Right ventricle myocardium superior (tissue), 1 donor: ENCODE measurements at regions of chr19 and their contacts with region 1.

Region 1: GRCh38 chr19:16041299-16041990 is 34.9 kb upstream of the TPM4 start:
- DNase-seq: peak; percentile 88
- ATAC-seq: peak; percentile 97

Region 2: DNA sequence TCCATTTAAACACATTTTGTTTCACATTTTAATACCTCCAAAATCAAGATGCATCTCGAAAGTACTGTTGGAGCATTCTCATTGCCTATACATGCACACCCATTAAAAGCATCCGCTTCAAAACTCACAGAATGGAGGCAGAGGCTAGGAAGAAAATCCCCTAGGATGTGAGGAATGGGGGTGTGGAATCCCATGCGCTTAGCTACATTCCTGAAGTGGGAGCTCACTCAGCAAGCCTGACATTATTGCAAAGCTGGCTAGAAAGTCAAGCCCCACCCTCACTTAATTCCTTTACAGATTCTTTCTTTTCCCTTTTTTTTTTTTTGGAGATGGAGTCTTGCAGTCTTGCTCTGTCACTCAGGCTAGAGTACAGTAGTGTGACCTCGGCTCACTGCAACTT is 139.2 kb after region 1 on chr19:
- intact Hi-C with region 1: loop called (anchors 5 kb)
- DNase-seq: no peak
- ATAC-seq: no peak